Panc1 (cell line): ENCODE measurements at regions of chr10 and their contacts with region 1.

Region 1: GRCh38 chr10:86945361-86946212 is 11.8 kb downstream of the MMRN2 start:
- DNase-seq: no peak
- ATAC-seq: peak; percentile 62
- H3K4me3 ChIP-seq: no peak overlapping the region
- H3K27ac ChIP-seq: no peak overlapping the region
- H3K4me1 ChIP-seq: no peaks in the 10 kb centered on the region
- H3K27me3 ChIP-seq: no peaks in the 10 kb centered on the region
- CTCF ChIP-seq: no peak; the same call in 1 of the 2 replicates

Region 2: GRCh38 chr10:85080934-85081333 is 1864.7 kb before region 1 on chr10:
- CTCF ChIA-PET with region 1: no interaction called
- POLR2A ChIA-PET with region 1: no interaction called
- in situ Hi-C with region 1: no loop called
- intact Hi-C with region 1: no loop called
- DNase-seq: no peak
- ATAC-seq: no peak
- H3K4me3 ChIP-seq: no peak overlapping the region
- H3K27ac ChIP-seq: no peak overlapping the region
- H3K4me1 ChIP-seq: no peaks in the 10 kb centered on the region
- H3K27me3 ChIP-seq: no peaks in the 10 kb centered on the region
- CTCF ChIP-seq: no peak; the same call in 1 of the 2 replicates

Region 3: GRCh38 chr10:86688398-86688921 is 257.1 kb before region 1 on chr10:
- CTCF ChIA-PET with region 1: no interaction called
- POLR2A ChIA-PET with region 1: no interaction called
- in situ Hi-C with region 1: no loop called
- intact Hi-C with region 1: no loop called
- DNase-seq: no peak
- ATAC-seq: peak; percentile 79
- H3K4me3 ChIP-seq: no peak overlapping the region
- H3K27ac ChIP-seq: no peak overlapping the region
- H3K4me1 ChIP-seq: peaks cover 22% of the 10 kb centered on the region
- H3K27me3 ChIP-seq: no peaks in the 10 kb centered on the region
- CTCF ChIP-seq: peak; percentile 93

Region 4: GRCh38 chr10:86965986-86966654 is 20.5 kb after region 1 on chr10:
- CTCF ChIA-PET with region 1: interaction called, 15 read pairs
- POLR2A ChIA-PET with region 1: no interaction called
- in situ Hi-C with region 1: no loop called
- intact Hi-C with region 1: no loop called
- DNase-seq: no peak
- ATAC-seq: no peak
- H3K4me3 ChIP-seq: no peak overlapping the region
- H3K27ac ChIP-seq: no peak overlapping the region; the same call in 1 of the 2 replicates
- H3K4me1 ChIP-seq: peaks cover 42% of the 10 kb centered on the region
- H3K27me3 ChIP-seq: no peaks in the 10 kb centered on the region
- CTCF ChIP-seq: no peak

Region 5: GRCh38 chr10:86971232-86971991 is 25.8 kb after region 1 on chr10:
- CTCF ChIA-PET with region 1: interaction called, 15 read pairs
- POLR2A ChIA-PET with region 1: no interaction called
- in situ Hi-C with region 1: no loop called
- intact Hi-C with region 1: no loop called
- DNase-seq: peak; percentile 80
- ATAC-seq: peak; percentile 75
- H3K4me3 ChIP-seq: peak overlapping the region; percentile 54 to 77
- H3K27ac ChIP-seq: peak overlapping the region; percentile 79
- H3K4me1 ChIP-seq: peaks cover 45% of the 10 kb centered on the region
- H3K27me3 ChIP-seq: no peaks in the 10 kb centered on the region
- CTCF ChIP-seq: no peak

Region 6: GRCh38 chr10:87094373-87095235 is 149.0 kb after region 1 on chr10 and contains the starts of genes GLUD1 and SHLD2:
- CTCF ChIA-PET with region 1: no interaction called
- POLR2A ChIA-PET with region 1: no interaction called
- in situ Hi-C with region 1: no loop called
- intact Hi-C with region 1: no loop called
- DNase-seq: no peak
- ATAC-seq: peak; percentile 92
- H3K4me3 ChIP-seq: peak within 1 kb of the TSS; percentile 82 to 83
- H3K27ac ChIP-seq: peak within 1 kb of the TSS; percentile 90
- H3K4me1 ChIP-seq: peaks cover 27% of the 10 kb centered on the region
- H3K27me3 ChIP-seq: no peaks in the 10 kb centered on the region
- CTCF ChIP-seq: no peak
- total RNA-seq, gene GLUD1: 138 TPM
- total RNA-seq, gene SHLD2: 45.2 TPM